ENCODE measurements at regions of chr10 and their contacts with region 1.

Region 1: DNA sequence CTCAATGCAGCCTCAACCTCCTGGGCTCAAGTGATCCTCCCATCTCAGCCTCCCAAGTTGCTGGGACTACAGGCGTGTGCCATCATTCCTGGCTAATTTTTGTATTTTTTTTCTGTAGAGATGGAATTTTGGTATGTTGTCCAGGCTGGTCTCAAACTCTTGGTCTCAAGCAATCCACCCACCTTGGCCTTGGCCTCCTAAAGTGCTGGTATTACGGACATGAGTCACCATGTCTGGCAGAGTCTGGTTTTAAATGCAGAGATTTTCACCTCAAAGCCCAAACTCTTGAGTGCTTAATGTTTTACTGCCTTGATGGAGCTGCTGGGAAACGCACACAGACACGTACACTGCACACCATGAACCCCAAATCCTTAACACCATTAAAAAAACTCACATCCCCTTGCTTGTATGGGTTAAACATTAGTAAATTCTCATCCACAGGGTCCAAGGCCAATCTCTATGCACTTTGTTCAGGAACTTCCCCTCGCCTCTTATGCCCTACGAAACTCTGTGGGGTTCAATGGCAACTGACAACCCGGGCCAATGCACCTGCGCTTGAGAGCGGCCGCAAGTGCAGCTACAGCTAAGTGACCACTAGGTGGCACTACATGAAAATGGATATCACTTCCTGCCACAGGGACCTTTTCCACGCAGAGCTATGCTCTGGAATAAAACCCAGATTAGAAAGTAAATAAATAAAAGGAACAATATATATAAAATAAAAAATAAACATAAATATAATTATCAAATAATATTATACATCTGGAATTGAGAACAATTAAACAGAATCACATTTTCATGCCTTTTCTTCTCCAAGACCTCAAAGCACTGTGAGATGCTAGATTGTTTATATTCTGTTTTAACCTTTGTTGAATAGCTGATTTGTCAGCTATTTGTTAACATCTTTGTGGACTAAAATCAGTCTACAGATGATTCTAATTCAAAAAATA is 66.9 kb upstream of the AFAP1L2 start:
- DNase-seq: peak; percentile 81 to 90 (median 89)
- H3K4me3 ChIP-seq: no peak overlapping the region
- H3K27ac ChIP-seq: no peak overlapping the region
- H3K4me1 ChIP-seq: peaks cover 0 to 3% (median 2%) of the 10 kb centered on the region in 4 experiments
- H3K27me3 ChIP-seq: no peaks in the 10 kb centered on the region

Region 2: GRCh38 chr10:114486938-114487814 is 15.9 kb after region 1 on chr10:
- CTCF ChIA-PET with region 1: interaction called, 17 read pairs
- POLR2A ChIA-PET with region 1: interaction called, 5 read pairs
- DNase-seq: peak in 1 of 3 donors; percentile 39
- H3K4me3 ChIP-seq: no peak overlapping the region
- H3K27ac ChIP-seq: no peak overlapping the region
- H3K4me1 ChIP-seq: peaks cover under 1 to 12% (median 3%) of the 10 kb centered on the region in 4 experiments
- H3K27me3 ChIP-seq: no peaks in the 10 kb centered on the region

Region 3: GRCh38 chr10:114519284-114519624 is 48.0 kb after region 1 on chr10:
- CTCF ChIA-PET with region 1: interaction called, 20 read pairs
- POLR2A ChIA-PET with region 1: no interaction called
- DNase-seq: no peak
- H3K4me3 ChIP-seq: no peak overlapping the region
- H3K27ac ChIP-seq: no peak overlapping the region
- H3K4me1 ChIP-seq: peaks cover 17 to 86% (median 41%) of the 10 kb centered on the region in 4 experiments
- H3K27me3 ChIP-seq: no peaks in the 10 kb centered on the region

Region 4: DNA sequence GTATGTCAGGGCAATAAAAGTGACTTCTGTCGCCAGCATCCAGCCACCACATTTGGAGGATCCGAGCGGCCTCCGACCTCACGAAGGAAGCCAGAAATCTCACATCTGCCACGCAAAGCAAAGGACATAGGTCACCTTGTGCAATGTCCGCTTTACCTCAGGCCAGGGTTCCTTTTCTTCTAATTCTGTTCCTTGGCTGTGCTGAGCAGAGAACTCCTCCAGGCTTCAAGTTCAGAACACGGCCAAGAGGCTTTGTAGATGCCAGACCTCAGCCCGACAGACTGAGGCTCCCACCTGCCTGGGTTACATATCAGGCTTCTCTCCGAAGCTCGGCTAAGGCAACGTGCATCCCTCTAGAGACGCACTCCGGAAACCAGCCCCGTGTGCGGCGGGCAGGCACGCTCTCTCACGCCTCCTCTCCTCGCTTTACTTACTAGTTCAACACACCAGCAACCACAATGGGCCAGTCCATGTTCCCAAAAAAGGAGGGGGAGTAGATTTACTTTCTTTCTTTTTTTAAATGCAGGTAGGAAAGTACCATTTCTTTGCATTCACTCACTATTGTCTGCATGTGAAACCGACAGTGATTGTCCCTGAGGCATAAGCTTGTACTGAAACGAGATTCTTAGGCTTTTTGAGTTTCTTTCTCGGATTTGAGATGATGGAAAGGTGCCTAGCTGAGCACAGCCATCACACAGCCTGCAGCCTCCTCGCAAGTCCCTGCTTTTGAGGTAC is 55.4 kb after region 1 on chr10:
- CTCF ChIA-PET with region 1: interaction called, 20 read pairs
- POLR2A ChIA-PET with region 1: no interaction called
- DNase-seq: peak; percentile 93 to 98 (median 98)
- H3K4me3 ChIP-seq: peak overlapping the region in 6 of 7 experiments; percentile 51 to 77 (median 66)
- H3K27ac ChIP-seq: peak overlapping the region; percentile 56 to 72
- H3K4me1 ChIP-seq: peaks cover 17 to 53% (median 38%) of the 10 kb centered on the region in 4 experiments
- H3K27me3 ChIP-seq: no peaks in the 10 kb centered on the region

Region 5: DNA sequence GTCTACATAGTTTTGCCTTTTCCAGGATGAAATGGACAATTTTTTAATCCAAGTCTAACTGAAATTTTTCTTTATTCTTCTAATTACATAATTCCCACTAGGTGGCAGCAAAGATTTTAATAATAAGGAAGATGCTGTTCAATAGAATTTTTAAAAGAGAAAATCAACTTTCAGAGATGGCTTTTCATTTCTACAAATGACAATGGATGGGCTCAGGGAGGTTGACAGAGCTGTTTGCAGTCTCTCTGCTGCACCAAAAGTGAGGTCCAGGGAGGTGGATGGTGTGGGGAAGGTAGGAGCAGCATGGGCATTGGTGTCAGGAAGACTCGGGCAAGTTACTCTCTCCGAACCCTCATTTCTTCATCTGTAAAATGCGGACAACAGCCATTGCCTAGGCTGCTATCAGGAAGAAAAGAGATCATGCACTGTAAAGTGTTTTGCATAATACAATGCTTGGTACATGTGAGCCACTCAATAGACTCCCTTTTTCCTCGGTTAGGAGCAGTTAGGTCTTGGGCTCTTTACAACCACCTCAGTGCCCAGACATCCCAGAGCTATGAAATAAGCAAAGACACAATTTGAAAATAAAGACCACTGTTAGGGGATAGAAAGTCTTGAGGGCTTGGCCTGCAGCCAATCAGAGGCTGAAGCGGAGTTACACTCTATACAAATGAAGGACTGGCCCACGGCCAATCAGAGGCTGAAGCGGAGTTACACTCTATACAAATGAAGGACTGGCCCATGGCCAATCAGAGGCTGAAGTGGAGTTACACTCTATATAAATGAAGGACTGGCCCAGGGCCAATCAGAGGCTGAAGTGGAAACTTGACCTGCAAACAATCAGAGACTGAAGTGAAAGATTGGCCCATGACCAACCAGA is 79.8 kb after region 1 on chr10:
- CTCF ChIA-PET with region 1: interaction called, 15 read pairs
- POLR2A ChIA-PET with region 1: interaction called, 3 read pairs
- DNase-seq: peak; percentile 31 to 55 (median 55)
- H3K4me3 ChIP-seq: no peak overlapping the region
- H3K27ac ChIP-seq: no peak overlapping the region
- H3K4me1 ChIP-seq: peaks cover 0 to 16% (median 4%) of the 10 kb centered on the region in 4 experiments
- H3K27me3 ChIP-seq: no peaks in the 10 kb centered on the region

Region 6: GRCh38 chr10:114703377-114704107 is 232.3 kb after region 1 on chr10:
- CTCF ChIA-PET with region 1: interaction called, 32 read pairs
- POLR2A ChIA-PET with region 1: no interaction called
- DNase-seq: peak; percentile 61 to 83 (median 81)
- H3K4me3 ChIP-seq: no peak overlapping the region
- H3K27ac ChIP-seq: no peak overlapping the region
- H3K4me1 ChIP-seq: peaks cover 0 to 5% (median under 1%) of the 10 kb centered on the region in 4 experiments
- H3K27me3 ChIP-seq: no peaks in the 10 kb centered on the region